Sigmoid colon (tissue), 7 donors: ENCODE measurements at regions of chr6 and their contacts with region 1.

Region 1: DNA sequence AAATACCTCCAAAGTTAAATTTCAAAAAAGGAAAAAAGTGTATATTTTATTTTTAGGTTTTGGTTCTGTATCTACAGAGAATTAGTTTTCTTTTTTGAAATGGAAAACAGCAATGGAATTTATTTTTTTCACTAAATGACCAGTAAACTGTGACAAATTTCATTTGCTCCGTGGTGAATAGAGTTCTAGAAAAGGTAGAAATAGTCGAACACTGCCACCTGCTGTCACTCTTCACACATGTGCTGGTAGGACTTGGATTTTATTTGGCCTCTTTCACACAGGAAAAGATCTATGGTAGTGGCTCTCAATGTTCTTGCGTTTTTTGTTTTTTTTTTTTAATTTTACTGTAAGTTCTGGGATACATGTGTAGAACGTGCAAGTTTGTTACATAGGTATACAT is 312.5 kb downstream of the EYA4 start:
- DNase-seq: no peak
- H3K4me3 ChIP-seq: no peak overlapping the region
- H3K27ac ChIP-seq: no peak overlapping the region
- H3K4me1 ChIP-seq: peaks cover 0 to 23% (median 16%) of the 10 kb centered on the region in 4 donors
- H3K27me3 ChIP-seq: no peaks in the 10 kb centered on the region
- CTCF ChIP-seq: peak; percentile 37 to 59 (median 48)
- EP300 ChIP-seq: no peak
- POLR2A ChIP-seq: no peak

Region 2: GRCh38 chr6:132054525-132054924 is 1499.1 kb before region 1 on chr6:
- intact Hi-C with region 1: no loop called
- DNase-seq: no peak
- H3K4me3 ChIP-seq: no peak overlapping the region
- H3K27ac ChIP-seq: no peak overlapping the region
- H3K4me1 ChIP-seq: peaks cover 0 to 15% (median 0%) of the 10 kb centered on the region in 4 donors
- H3K27me3 ChIP-seq: no peaks in the 10 kb centered on the region
- CTCF ChIP-seq: no peak
- EP300 ChIP-seq: no peak
- POLR2A ChIP-seq: no peak

Region 3: DNA sequence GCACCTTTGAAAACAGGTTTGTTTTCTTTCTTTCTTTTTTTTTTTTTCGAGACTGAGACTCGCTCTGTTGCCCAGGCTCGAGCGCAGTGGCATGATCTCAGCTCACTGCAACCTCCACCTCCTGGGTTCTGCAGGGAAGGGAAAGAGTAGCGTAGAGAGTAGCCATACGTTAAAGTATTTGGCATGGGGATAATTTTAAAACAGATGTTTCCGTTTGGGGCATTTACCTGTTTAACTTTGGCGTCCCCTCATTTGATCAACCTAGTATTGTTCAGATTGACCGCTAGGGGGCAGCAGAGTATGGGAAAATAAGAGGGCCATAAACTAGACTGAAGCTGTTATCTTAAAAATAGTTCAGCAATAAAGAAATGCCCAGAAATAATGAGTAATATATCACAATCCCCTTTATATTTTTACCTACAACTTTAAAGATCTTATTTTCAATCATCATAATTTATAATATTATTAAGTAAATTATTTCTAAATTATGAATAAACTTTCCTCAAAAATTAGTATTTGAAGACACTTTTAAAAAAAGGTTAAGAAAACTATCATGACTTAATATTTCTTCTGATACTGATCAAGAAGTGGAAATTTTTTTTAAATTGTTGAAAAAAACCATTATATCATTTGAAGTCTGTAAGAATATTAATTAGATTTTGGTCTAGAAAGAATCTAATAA is 1023.2 kb before region 1 on chr6:
- intact Hi-C with region 1: loop called (anchors 10 kb)
- DNase-seq: peak; percentile 66
- H3K4me3 ChIP-seq: no peak overlapping the region
- H3K27ac ChIP-seq: no peak overlapping the region
- H3K4me1 ChIP-seq: no peaks in the 10 kb centered on the region
- H3K27me3 ChIP-seq: no peaks in the 10 kb centered on the region
- CTCF ChIP-seq: peak; percentile 53 to 89 (median 65)
- EP300 ChIP-seq: no peak
- POLR2A ChIP-seq: no peak

Region 4: GRCh38 chr6:132820629-132821381 is 732.8 kb before region 1 on chr6:
- intact Hi-C with region 1: loop called (anchors 5 kb)
- DNase-seq: no peak
- H3K4me3 ChIP-seq: no peak overlapping the region
- H3K27ac ChIP-seq: peak overlapping the region in 2 of 4 donors; percentile 9 to 37
- H3K4me1 ChIP-seq: peaks cover 0 to 31% (median 21%) of the 10 kb centered on the region in 4 donors
- H3K27me3 ChIP-seq: no peaks in the 10 kb centered on the region
- CTCF ChIP-seq: no peak
- EP300 ChIP-seq: no peak
- POLR2A ChIP-seq: no peak

Region 5: GRCh38 chr6:132962936-132963868 is 590.5 kb before region 1 on chr6:
- intact Hi-C with region 1: loop called (anchors 5 kb)
- DNase-seq: no peak
- H3K4me3 ChIP-seq: no peak overlapping the region
- H3K27ac ChIP-seq: no peak overlapping the region
- H3K4me1 ChIP-seq: no peaks in the 10 kb centered on the region
- H3K27me3 ChIP-seq: no peaks in the 10 kb centered on the region
- CTCF ChIP-seq: peak in 3 of 4 experiments; percentile 35 to 70 (median 40)
- EP300 ChIP-seq: no peak
- POLR2A ChIP-seq: no peak

Region 6: DNA sequence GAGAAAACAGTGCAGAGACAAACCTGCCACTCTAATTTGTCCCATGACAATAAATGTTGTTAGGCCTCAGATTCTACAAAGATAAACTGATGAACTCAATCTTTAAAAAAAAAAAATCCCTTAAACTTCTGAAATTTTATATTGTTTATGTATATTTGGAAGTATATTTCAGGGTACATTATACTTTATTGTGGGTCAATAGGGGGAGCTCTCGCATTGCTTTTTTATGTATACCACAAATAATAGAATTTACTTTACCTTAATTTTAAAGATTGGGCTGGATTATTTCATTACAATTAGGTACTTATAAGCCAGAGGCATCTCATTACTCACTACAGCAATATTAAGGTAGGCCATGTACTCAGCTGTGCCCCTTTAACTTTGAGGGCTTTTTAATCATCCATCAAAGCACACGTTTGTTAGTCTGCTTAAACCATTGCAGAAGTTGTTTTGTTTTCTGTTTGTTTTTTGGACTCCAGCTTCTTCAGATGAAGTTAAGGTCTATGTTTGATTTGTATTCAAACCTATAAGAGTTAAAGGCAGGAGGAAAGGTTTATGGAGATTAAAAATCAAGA is 368.8 kb before region 1 on chr6:
- intact Hi-C with region 1: loop called (anchors 5 kb)
- DNase-seq: no peak
- H3K4me3 ChIP-seq: no peak overlapping the region
- H3K27ac ChIP-seq: no peak overlapping the region
- H3K4me1 ChIP-seq: no peaks in the 10 kb centered on the region
- H3K27me3 ChIP-seq: no peaks in the 10 kb centered on the region
- CTCF ChIP-seq: peak in 1 of 4 experiments; percentile 36
- EP300 ChIP-seq: no peak
- POLR2A ChIP-seq: no peak

Region 7: GRCh38 chr6:133314947-133315346 is 238.7 kb before region 1 on chr6:
- intact Hi-C with region 1: no loop called
- DNase-seq: no peak
- H3K4me3 ChIP-seq: no peak overlapping the region
- H3K27ac ChIP-seq: no peak overlapping the region
- H3K4me1 ChIP-seq: no peaks in the 10 kb centered on the region
- H3K27me3 ChIP-seq: no peaks in the 10 kb centered on the region
- CTCF ChIP-seq: no peak
- EP300 ChIP-seq: no peak
- POLR2A ChIP-seq: no peak